ENCODE measurements at regions of chr1 and their contacts with region 1.

Region 1: GRCh38 chr1:77219166-77219887 is at the start of gene PIGK:
- DNase-seq: peak; percentile 62 to 87 (median 84)
- ATAC-seq: peak; percentile 99
- H3K4me3 ChIP-seq: peak within 1 kb of the TSS; percentile 99
- H3K4me3 Mint-ChIP-seq: peak within 1 kb of the TSS; percentile 92 to 97 (median 96)
- H3K27ac ChIP-seq: peak within 1 kb of the TSS; percentile 89
- H3K27ac Mint-ChIP-seq: peak within 1 kb of the TSS; percentile 91 to 99 (median 96)
- H3K4me1 ChIP-seq: peaks cover 13 to 15% of the 10 kb centered on the region in 2 donors
- H3K4me1 Mint-ChIP-seq: peaks cover 34 to 75% (median 62%) of the 10 kb centered on the region in 7 donors
- H3K27me3 ChIP-seq: no peaks in the 10 kb centered on the region
- H3K27me3 Mint-ChIP-seq: no peaks in the 10 kb centered on the region
- total RNA-seq, gene PIGK: 17.7 to 31.3 (median 20.6) TPM

Region 2: DNA sequence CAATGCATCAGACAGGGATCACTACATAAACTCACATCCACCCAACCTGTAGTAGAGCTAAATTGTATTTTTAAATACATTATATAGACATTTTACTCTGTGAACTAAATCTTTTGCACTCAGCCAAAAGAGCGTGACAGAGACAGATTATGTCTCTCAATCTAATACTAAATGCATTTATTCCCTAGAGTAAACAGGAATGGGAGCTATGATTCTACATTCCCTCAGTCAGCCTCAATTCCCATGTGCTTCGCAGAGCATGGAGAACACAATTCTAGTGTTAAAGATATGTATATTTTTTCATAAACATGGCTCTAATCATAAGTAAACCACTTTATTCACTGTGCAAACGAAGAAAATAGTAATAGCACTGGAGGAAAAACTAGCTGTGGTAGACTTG is 16.6 kb before region 1 on chr1:
- CTCF ChIA-PET with region 1: no interaction called
- POLR2A ChIA-PET with region 1: no interaction called
- intact Hi-C with region 1: loop called in 1 of 2 experiments (anchors 2 kb)
- DNase-seq: no peak
- ATAC-seq: no peak
- H3K4me3 ChIP-seq: no peak overlapping the region
- H3K4me3 Mint-ChIP-seq: no peak overlapping the region
- H3K27ac ChIP-seq: no peak overlapping the region
- H3K27ac Mint-ChIP-seq: peak overlapping the region in 1 of 9 donors; percentile 2
- H3K4me1 ChIP-seq: no peaks in the 10 kb centered on the region
- H3K4me1 Mint-ChIP-seq: peaks cover 0 to 27% (median 12%) of the 10 kb centered on the region in 7 donors
- H3K27me3 ChIP-seq: no peaks in the 10 kb centered on the region
- H3K27me3 Mint-ChIP-seq: no peaks in the 10 kb centered on the region

Region 3: DNA sequence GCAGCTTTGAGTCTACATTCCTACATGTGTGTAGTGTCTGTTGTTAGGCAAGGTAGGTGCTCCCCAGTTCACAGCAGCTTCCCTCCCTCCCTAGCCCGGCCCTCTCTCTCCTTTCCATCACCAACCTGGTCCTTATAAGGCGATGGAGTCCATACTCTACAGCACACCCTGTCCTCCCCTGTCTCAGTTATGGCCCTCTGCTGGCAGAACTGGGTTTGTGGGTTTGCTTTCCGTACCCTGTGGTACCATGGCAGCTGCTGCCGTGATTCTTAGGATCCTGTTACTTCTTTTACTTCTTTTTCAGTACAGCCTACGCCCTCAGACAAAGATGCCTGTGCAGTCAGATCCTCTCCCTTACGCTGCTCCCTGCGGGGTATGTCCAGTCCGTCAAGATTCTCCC is 94.2 kb after region 1 on chr1:
- CTCF ChIA-PET with region 1: no interaction called
- POLR2A ChIA-PET with region 1: interaction called, 3 read pairs
- intact Hi-C with region 1: loop called in 1 of 2 experiments (anchors 1 kb)
- DNase-seq: peak in 8 of 9 donors; percentile 7 to 29 (median 26)
- ATAC-seq: peak; percentile 82
- H3K4me3 ChIP-seq: no peak overlapping the region
- H3K4me3 Mint-ChIP-seq: peak overlapping the region in 4 of 10 donors; percentile 23 to 53 (median 38)
- H3K27ac ChIP-seq: no peak overlapping the region
- H3K27ac Mint-ChIP-seq: peak overlapping the region in 8 of 9 donors; percentile 13 to 84 (median 68)
- H3K4me1 ChIP-seq: peaks cover 2 to 19% of the 10 kb centered on the region in 2 donors
- H3K4me1 Mint-ChIP-seq: peaks cover 17 to 58% (median 49%) of the 10 kb centered on the region in 7 donors
- H3K27me3 ChIP-seq: no peaks in the 10 kb centered on the region
- H3K27me3 Mint-ChIP-seq: no peaks in the 10 kb centered on the region

Region 4: GRCh38 chr1:77533660-77534305 is 314.5 kb after region 1 on chr1:
- CTCF ChIA-PET with region 1: interaction called, 3 read pairs
- POLR2A ChIA-PET with region 1: no interaction called
- intact Hi-C with region 1: loop called (anchors 1 kb)
- DNase-seq: peak; percentile 34 to 75 (median 60)
- ATAC-seq: peak; percentile 71
- H3K4me3 ChIP-seq: no peak overlapping the region
- H3K4me3 Mint-ChIP-seq: peak overlapping the region in 6 of 10 donors; percentile 22 to 69 (median 50)
- H3K27ac ChIP-seq: no peak overlapping the region
- H3K27ac Mint-ChIP-seq: peak overlapping the region in 8 of 9 donors; percentile 16 to 94 (median 38)
- H3K4me1 ChIP-seq: peaks cover 0 to 4% of the 10 kb centered on the region in 2 donors
- H3K4me1 Mint-ChIP-seq: peaks cover 2 to 16% (median 10%) of the 10 kb centered on the region in 7 donors
- H3K27me3 ChIP-seq: no peaks in the 10 kb centered on the region
- H3K27me3 Mint-ChIP-seq: no peaks in the 10 kb centered on the region

Region 5: GRCh38 chr1:77779529-77780281 is 560.4 kb after region 1 on chr1 and contains the start of gene MIGA1:
- CTCF ChIA-PET with region 1: no interaction called
- POLR2A ChIA-PET with region 1: no interaction called
- intact Hi-C with region 1: loop called in 1 of 2 experiments (anchors 1 kb)
- DNase-seq: peak; percentile 61 to 92 (median 86)
- ATAC-seq: peak; percentile 99
- H3K4me3 ChIP-seq: peak within 1 kb of the TSS; percentile 68
- H3K4me3 Mint-ChIP-seq: peak within 1 kb of the TSS; percentile 90 to 98 (median 94)
- H3K27ac ChIP-seq: peak within 1 kb of the TSS; percentile 87
- H3K27ac Mint-ChIP-seq: peak within 1 kb of the TSS; percentile 88 to 96 (median 93)
- H3K4me1 ChIP-seq: peaks cover 11 to 15% of the 10 kb centered on the region in 2 donors
- H3K4me1 Mint-ChIP-seq: peaks cover 21 to 54% (median 49%) of the 10 kb centered on the region in 7 donors
- H3K27me3 ChIP-seq: no peaks in the 10 kb centered on the region
- H3K27me3 Mint-ChIP-seq: peaks cover 0 to 3% (median 0%) of the 10 kb centered on the region in 5 donors
- total RNA-seq, gene MIGA1: 12.1 to 23.5 (median 15.9) TPM

Region 6: DNA sequence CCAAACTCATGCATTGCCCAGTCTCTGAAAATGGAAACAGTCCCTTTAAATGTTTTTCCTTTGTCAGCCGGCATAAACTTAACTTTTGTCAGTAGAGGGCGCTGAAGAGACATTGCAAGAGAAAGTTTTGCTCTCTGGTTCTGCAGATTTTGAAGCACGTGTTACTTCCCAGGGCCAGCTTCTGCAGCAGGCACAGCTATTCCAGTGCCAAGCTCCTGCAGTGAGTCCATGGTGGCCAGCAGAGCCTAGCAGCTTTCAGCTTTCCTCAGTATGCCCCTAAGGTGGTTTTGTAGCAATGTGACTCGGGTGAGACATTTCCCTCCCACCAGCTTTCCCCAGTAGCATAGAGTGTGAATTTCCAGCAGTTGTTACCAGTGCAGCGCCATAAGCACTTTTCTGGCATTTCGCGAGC is 1398.3 kb after region 1 on chr1:
- CTCF ChIA-PET with region 1: no interaction called
- POLR2A ChIA-PET with region 1: no interaction called
- intact Hi-C with region 1: loop called in 1 of 2 experiments (anchors 10 kb)
- DNase-seq: peak; percentile 13 to 82 (median 79)
- ATAC-seq: peak; percentile 84
- H3K4me3 ChIP-seq: no peak overlapping the region
- H3K4me3 Mint-ChIP-seq: peak overlapping the region in 3 of 10 donors; percentile 26 to 56 (median 44)
- H3K27ac ChIP-seq: no peak overlapping the region
- H3K27ac Mint-ChIP-seq: peak overlapping the region in 8 of 9 donors; percentile 23 to 99 (median 72)
- H3K4me1 ChIP-seq: peaks cover 7 to 19% of the 10 kb centered on the region in 2 donors
- H3K4me1 Mint-ChIP-seq: peaks cover 18 to 51% (median 42%) of the 10 kb centered on the region in 7 donors
- H3K27me3 ChIP-seq: no peaks in the 10 kb centered on the region
- H3K27me3 Mint-ChIP-seq: peaks cover 0 to 14% (median 0%) of the 10 kb centered on the region in 5 donors

Measured in naive thymus-derived CD4-positive, alpha-beta T cell (primary cell).